ENCODE measurements at regions of chr5 and their contacts with region 1.

Region 1: DNA sequence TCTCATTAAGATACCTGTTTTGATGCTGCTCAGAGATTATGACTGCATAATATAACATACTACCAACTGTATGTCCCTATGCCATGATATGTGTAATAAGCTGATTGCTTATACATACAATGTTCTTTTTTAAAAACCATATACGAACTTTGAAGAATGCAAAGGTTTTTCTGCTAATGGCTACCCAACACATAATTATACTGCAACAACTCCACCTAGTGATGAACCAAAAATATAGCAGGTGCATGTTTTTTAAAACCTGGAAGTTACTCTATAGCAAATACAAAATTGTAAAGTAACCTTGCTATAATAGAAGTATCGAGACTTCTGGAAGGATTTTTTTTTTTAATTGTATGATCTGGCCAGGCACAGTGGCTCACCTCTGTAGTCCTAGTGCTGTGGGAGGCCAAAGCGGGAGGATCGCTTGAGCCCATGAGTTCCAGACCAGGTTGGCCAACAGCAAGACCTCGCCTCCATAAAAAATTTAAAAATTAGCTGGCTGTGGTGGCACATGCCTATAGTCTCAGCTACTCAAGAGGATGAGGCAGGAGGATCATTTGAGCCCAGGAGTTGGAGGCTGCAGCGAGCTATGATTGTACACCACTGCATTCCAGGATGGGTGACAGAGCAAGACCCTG is 49.1 kb downstream of the HOMER1 start:
- DNase-seq: no peak
- H3K4me3 ChIP-seq: peak overlapping the region in 15 of 59 donors; percentile 5 to 36 (median 27)
- H3K27ac ChIP-seq: no peak overlapping the region
- H3K27me3 ChIP-seq: no peaks in the 10 kb centered on the region
- CTCF ChIP-seq: peak; percentile 49 to 85 (median 70)

Region 2: GRCh38 chr5:79020861-79021561 is 443.8 kb before region 1 on chr5:
- intact Hi-C with region 1: loop called in 1 of 2 experiments (anchors 2 kb)
- DNase-seq: peak; percentile 28 to 75 (median 63)
- H3K4me3 ChIP-seq: peak overlapping the region in 45 of 59 donors; percentile 3 to 57 (median 29)
- H3K27ac ChIP-seq: no peak overlapping the region
- H3K27me3 ChIP-seq: no peaks in the 10 kb centered on the region
- CTCF ChIP-seq: peak; percentile 55 to 94 (median 84)

Region 3: GRCh38 chr5:79133657-79134451 is 331.0 kb before region 1 on chr5:
- intact Hi-C with region 1: loop called in 1 of 2 experiments (anchors 5 kb)
- DNase-seq: peak; percentile 27 to 76 (median 57)
- H3K4me3 ChIP-seq: peak overlapping the region in 57 of 59 donors; percentile 6 to 66 (median 41)
- H3K27ac ChIP-seq: peak overlapping the region in 54 of 59 donors; percentile 3 to 88 (median 68)
- H3K27me3 ChIP-seq: no peaks in the 10 kb centered on the region
- CTCF ChIP-seq: peak in 55 of 56 donors; percentile 37 to 79 (median 65)

Region 4: DNA sequence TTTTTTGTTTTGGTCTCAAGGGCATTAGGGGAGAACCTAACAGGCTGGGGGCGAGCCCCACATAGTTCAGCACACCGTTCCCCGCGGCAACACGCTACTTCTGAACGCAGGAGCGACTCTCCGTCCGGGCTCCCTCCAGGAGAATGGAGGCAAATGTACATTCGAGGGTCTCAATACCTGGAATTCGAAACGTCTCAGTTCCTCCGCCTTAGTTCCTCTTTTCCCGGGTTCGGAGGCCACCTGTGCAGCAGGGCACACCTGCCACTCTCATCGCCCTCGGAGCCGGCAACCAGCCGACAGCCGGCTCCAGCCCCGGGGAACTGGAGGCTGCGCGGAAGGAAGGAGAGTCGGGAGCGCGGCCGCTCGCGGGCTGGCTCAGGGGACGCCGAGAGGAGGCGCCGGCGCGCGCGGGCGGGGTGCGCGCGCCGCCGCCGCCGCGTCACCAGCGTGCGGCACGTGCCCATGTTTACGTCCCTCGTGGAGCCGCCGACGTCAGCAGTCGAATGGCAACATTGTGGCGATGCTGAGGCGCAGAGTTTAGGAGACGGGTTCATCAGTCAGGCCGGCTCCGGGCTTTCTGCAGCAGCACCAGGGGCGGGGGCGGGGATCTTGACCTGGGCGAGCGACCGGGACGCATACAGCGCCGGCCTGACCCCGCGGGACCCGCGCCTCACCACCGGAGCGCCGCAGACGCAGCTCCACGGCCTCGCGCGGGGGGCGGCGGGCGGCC is 229.0 kb before region 1 on chr5 and contains the start of gene JMY:
- intact Hi-C with region 1: loop called in 1 of 2 experiments (anchors 10 kb)
- DNase-seq: peak; percentile 72 to 90 (median 88)
- H3K4me3 ChIP-seq: peak within 1 kb of the TSS; percentile 64 to 99 (median 92)
- H3K27ac ChIP-seq: peak within 1 kb of the TSS; percentile 41 to 95 (median 87)
- H3K27me3 ChIP-seq: no peaks in the 10 kb centered on the region
- CTCF ChIP-seq: peak in 25 of 56 donors; percentile 4 to 61 (median 26)
- total RNA-seq, gene JMY: 21.8 to 40.5 (median 29.8) TPM

Measured in dorsolateral prefrontal cortex (tissue), 120 donors.